Breast epithelium (tissue), 4 donors: ENCODE measurements at regions of chr2 and their contacts with region 1.

Region 1: DNA sequence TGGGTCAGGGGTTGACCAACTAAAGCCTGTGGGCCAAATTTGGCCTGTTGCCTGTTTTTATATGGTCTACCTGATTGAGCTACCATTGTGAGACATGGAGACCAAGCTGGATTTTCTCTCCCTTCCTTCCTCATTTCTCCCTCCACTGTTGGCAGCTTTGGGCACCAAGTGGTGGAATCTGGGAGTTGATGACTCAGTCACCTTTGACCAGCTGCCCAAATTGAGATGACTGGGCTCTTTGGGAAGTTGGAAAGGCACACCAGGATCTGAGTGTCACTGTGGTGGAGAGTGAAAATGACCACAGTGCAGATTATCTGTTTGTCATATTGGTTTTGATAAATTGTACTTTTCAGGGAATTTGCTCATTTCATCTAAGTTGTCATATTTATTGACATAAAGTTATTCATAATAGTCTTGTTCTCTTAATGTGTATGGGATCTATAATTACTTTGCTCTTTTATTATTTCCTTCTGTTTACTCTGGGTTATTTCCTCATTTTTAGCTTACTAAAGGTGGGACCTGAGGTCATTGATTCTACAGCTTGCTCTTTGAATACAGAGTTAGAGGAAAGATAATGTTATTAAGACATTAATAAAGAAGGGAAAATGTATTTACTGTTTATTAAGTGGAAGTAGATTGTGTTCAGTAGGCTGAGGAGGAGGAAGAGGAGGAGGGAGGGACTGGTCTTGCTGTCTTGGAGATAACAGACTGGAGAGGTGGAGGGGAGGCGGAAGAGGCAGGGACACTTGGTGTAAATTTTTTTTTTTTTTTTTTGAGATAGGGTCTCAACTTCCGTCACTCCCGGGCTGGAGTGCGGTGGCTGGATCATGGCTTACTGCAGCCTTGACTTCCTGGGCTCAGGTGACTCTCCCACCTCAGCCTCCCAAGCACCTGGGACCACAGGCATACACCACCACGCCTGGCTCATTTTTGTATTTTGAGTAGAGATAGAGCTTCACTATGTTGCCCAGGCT is 31.8 kb downstream of the AGFG1 start:
- DNase-seq: peak in 1 of 2 donors; percentile 30
- H3K4me3 ChIP-seq: no peak overlapping the region
- H3K27ac ChIP-seq: peak overlapping the region; percentile 14 to 67
- H3K4me1 ChIP-seq: peaks cover 0 to 1% of the 10 kb centered on the region in 2 donors
- H3K27me3 ChIP-seq: no peaks in the 10 kb centered on the region
- CTCF ChIP-seq: no peak
- POLR2A ChIP-seq: no peak

Region 2: GRCh38 chr2:227415538-227416424 is 87.9 kb before region 1 on chr2:
- intact Hi-C with region 1: loop called (anchors 5 kb)
- DNase-seq: no peak
- H3K4me3 ChIP-seq: peak overlapping the region in 1 of 3 donors; percentile 20
- H3K27ac ChIP-seq: peak overlapping the region in 1 of 2 donors; percentile 82
- H3K4me1 ChIP-seq: no peaks in the 10 kb centered on the region
- H3K27me3 ChIP-seq: no peaks in the 10 kb centered on the region
- CTCF ChIP-seq: no peak
- POLR2A ChIP-seq: no peak

Region 3: DNA sequence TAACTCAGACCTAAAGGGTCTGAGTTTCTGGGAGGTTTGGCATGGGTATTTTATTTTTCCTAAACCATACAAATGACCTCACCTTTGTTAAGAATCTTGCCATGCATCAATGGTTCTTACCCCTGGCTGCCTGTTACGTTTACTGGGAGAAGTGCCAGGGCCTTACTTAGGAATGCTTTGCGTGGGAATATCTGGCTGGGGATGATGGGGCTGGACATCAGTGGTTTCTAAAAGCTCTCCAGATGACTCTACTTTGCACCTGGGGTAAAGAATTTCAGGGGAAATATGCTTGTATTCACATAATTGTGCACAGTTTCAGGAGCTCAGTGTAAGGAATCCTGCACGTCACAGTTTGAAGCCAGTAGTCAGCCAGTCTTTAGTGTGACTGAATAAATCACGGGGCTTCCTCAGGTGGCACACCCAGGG is 349.5 kb after region 1 on chr2:
- intact Hi-C with region 1: no loop called
- DNase-seq: peak in 1 of 2 donors; percentile 79
- H3K4me3 ChIP-seq: no peak overlapping the region
- H3K27ac ChIP-seq: peak overlapping the region; percentile 27 to 61
- H3K4me1 ChIP-seq: no peaks in the 10 kb centered on the region
- H3K27me3 ChIP-seq: no peaks in the 10 kb centered on the region
- CTCF ChIP-seq: no peak
- POLR2A ChIP-seq: no peak